ENCODE measurements at regions of chr7 and their contacts with region 1.

Region 1: DNA sequence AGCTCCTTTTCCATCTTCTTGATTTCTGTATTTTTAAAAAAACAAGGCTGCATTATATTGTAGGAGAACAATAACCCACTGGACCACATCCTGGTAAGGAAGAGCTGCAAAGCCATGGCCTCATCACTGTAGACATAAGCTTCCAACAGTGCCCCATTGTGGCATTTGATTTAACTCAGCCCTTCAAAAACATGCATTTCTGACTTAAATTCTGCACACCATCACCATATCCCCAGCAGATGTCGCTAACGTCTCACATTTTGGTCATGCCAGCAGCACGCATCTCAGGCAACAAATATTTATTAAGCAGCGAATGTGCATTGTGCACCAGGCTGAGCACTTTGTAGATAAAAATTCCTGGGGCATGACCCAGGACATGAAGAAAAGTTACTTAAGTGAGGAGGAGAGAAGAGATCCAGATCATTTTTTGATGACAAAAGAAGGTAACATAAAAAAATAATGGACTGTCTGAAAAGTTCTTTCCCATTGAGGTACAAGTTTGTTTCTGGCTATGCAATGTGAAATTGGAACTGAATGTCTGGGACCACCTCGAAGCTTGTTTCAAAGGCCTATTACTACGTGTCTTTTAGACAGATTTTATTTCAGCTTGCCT is 164.6 kb upstream of the CDCA7L start:
- DNase-seq: peak; percentile 73
- H3K4me3 Mint-ChIP-seq: no peak overlapping the region
- H3K27ac Mint-ChIP-seq: no peak overlapping the region
- H3K4me1 Mint-ChIP-seq: no peaks in the 10 kb centered on the region
- H3K27me3 Mint-ChIP-seq: no peaks in the 10 kb centered on the region

Region 2: DNA sequence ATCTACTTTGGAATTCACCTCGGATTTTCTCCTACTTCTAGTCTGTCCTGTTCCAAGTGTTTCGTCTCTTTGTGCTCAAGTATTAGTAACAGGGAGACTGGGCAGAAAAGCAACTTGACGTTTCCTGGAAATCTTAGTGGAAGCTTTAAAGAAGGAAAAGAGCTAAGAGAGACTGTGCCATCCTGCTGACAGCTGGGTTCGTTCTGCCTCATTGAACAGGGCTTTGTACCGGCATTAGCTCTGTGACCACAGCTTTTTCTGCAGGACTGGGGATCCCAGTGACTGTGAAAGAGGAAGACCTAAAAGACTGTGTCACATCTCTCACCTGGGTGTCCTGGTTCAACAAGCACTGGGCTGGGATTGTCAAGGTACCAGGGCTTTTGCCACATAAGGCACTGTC is 93.8 kb before region 1 on chr7:
- CTCF ChIA-PET with region 1: no interaction called
- POLR2A ChIA-PET with region 1: no interaction called
- intact Hi-C with region 1: no loop called
- DNase-seq: no peak
- H3K4me3 Mint-ChIP-seq: no peak overlapping the region
- H3K27ac Mint-ChIP-seq: no peak overlapping the region
- H3K4me1 Mint-ChIP-seq: no peaks in the 10 kb centered on the region
- H3K27me3 Mint-ChIP-seq: no peaks in the 10 kb centered on the region

Region 3: GRCh38 chr7:22173685-22174573 is 63.6 kb after region 1 on chr7:
- CTCF ChIA-PET with region 1: interaction called, 12 read pairs
- POLR2A ChIA-PET with region 1: no interaction called
- intact Hi-C with region 1: no loop called
- DNase-seq: peak; percentile 61
- H3K4me3 Mint-ChIP-seq: no peak overlapping the region
- H3K27ac Mint-ChIP-seq: no peak overlapping the region
- H3K4me1 Mint-ChIP-seq: peaks cover 9% of the 10 kb centered on the region
- H3K27me3 Mint-ChIP-seq: peaks cover 7% of the 10 kb centered on the region

Region 4: DNA sequence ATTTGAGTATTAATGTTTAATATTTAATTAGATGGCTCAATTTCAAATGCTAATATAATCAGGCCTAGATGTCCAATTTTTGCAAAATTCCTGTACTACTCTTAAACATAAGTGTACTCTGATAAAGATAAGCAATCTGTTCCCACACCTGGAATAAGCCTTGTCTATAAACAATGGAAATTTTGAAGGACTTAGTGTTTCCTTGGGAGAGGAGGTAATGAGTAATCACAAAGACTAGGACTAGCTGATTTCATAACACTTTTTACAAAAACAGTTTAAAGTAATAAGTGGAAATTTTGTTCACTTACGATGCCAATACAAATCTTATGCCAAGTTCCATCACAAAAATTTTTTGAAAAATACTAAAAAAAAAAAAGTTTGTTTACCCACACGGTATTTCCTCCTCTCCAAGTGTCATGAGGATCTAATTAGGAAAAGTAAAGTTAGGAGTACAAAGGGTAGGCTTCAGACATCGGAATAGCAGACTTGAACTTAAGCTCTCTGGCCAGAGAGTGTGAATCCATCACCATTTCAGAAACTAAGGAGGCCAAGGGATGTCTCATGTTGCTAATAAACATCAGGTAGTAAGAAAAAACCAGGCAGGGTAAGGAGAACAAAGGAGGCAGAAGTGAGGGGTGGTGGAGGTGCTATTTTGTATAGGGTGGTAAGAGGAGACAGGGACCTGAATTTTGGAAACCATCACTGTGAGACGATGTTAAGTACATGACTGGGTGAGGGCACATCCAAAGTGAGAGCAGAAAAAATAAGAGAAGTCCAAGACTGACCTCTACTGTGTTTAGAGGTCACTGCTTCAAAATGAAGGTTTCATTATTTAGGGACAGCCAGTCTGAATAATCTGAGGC is 185.3 kb after region 1 on chr7:
- CTCF ChIA-PET with region 1: interaction called, 4 read pairs
- POLR2A ChIA-PET with region 1: no interaction called
- intact Hi-C with region 1: loop called (anchors 1 kb)
- DNase-seq: no peak
- H3K4me3 Mint-ChIP-seq: no peak overlapping the region
- H3K27ac Mint-ChIP-seq: no peak overlapping the region
- H3K4me1 Mint-ChIP-seq: no peaks in the 10 kb centered on the region
- H3K27me3 Mint-ChIP-seq: peaks cover 10% of the 10 kb centered on the region

Region 5: GRCh38 chr7:22452142-22452959 is 342.0 kb after region 1 on chr7:
- CTCF ChIA-PET with region 1: interaction called, 5 read pairs
- POLR2A ChIA-PET with region 1: no interaction called
- intact Hi-C with region 1: loop called (anchors 1 kb)
- DNase-seq: peak; percentile 63
- H3K4me3 Mint-ChIP-seq: no peak overlapping the region
- H3K27ac Mint-ChIP-seq: no peak overlapping the region
- H3K4me1 Mint-ChIP-seq: peaks cover 4% of the 10 kb centered on the region
- H3K27me3 Mint-ChIP-seq: peaks cover 42% of the 10 kb centered on the region

Region 6: DNA sequence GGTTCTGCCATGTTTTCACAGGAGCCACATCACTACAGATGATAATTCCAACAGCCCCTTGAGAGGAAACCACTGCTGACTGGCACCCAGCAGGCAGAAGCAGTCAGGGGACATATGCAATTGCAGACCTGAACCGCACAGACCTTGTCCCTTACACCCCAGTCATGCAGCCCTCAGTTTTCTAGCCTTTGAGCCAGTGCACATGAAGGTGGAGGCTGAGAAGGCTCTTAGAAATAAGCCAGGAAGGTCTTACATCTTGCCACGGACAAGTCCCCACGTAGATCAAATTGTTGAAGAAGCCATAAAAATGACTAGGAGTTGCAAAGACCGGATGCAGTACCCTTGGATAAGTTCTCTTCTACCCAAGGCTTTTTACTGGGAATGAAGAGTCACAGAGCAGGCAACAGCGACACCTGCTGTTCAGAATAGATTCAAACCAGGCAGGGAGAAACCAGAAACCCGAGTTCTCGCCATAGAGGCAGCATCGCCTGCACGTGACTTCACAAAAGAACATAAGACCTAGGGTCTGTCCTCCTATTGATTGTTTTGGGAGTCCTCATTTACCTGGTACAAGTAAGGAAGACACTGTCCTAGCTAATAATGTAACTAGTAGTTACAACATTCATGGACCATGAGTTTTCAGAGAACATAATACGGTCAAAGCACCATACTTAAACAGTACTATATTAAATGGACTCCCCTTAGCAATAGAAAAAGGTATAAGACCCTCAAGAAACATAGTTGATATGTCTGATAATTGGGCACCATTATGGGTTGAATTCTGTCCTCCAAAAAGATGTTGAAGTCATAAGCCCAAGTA is 378.5 kb after region 1 on chr7:
- CTCF ChIA-PET with region 1: interaction called, 46 read pairs
- POLR2A ChIA-PET with region 1: no interaction called
- intact Hi-C with region 1: loop called (anchors 1 kb)
- DNase-seq: peak; percentile 70
- H3K4me3 Mint-ChIP-seq: no peak overlapping the region
- H3K27ac Mint-ChIP-seq: no peak overlapping the region
- H3K4me1 Mint-ChIP-seq: no peaks in the 10 kb centered on the region
- H3K27me3 Mint-ChIP-seq: peaks cover 9% of the 10 kb centered on the region

Region 7: DNA sequence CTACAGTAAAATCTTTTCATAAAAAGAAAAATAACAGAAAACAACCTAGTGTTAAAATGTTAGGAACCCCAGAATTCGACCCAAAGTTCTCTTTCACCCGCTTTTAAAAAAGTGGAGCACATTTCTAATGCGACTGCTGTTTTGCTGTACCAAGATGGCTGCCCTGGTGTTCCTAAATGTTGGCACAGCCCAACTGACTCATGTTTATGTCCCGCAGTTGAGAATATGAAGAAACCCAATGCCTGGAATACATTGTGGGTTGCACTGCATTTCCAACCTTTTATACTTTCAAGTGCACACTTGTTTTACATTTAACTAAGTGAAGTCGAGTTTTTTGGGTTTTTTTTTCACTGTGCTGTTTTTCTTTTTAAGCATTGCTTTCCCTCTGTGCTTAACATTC is 388.7 kb after region 1 on chr7:
- CTCF ChIA-PET with region 1: interaction called, 17 read pairs
- POLR2A ChIA-PET with region 1: no interaction called
- intact Hi-C with region 1: loop called (anchors 2 kb)
- DNase-seq: no peak
- H3K4me3 Mint-ChIP-seq: no peak overlapping the region
- H3K27ac Mint-ChIP-seq: no peak overlapping the region
- H3K4me1 Mint-ChIP-seq: peaks cover 3% of the 10 kb centered on the region
- H3K27me3 Mint-ChIP-seq: peaks cover 19% of the 10 kb centered on the region

Measured in activated CD4-positive, alpha-beta memory T cell treated with anti-CD3 and anti-CD28 coated beads for 36 hours (primary cell).